ENCODE measurements at regions of chr3 and their contacts with region 1.

Region 1: GRCh38 chr3:172461530-172462138 is 13.4 kb upstream of the GHSR start:
- DNase-seq: no peak
- ATAC-seq: peak; percentile 53
- H3K4me3 Mint-ChIP-seq: no peak overlapping the region
- H3K27ac Mint-ChIP-seq: no peak overlapping the region
- H3K4me1 Mint-ChIP-seq: no peaks in the 10 kb centered on the region
- H3K27me3 Mint-ChIP-seq: peaks cover 2% of the 10 kb centered on the region

Region 2: DNA sequence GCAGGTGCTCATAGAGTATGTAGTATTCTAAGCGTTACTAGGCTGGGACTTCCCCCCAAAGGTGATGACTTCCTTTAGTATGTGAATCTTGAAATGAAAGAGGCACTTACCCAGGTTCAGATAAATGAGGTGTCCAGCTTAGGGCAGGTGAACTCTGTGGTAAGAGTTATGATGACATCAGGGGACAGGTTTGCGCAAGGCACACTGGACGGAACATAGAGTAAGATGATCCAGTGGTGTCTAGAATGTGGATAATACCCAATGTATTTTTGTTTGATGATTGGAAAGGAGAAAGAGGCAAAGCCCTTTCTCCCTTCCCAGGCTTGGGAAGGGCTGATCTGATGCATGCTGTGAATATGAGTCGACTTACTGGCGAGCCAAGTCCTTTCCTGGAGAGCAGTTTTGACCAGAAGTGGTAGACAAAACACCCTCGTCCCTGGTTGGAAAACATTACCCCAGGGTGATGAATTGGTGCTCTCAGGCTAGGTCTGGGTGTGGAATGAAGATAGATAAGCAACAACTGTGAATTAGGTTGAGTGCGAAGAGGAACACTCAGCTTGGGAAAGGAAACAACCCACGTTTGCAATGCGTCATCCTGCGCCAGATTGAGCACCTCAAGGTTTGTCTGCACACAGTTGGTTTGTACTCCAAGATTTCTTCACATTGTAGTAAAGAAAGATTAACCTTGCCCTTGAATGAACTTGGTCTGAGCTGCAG is 137.6 kb before region 1 on chr3:
- CTCF ChIA-PET with region 1: no interaction called
- POLR2A ChIA-PET with region 1: no interaction called
- intact Hi-C with region 1: no loop called
- DNase-seq: peak; percentile 59
- ATAC-seq: peak; percentile 92
- H3K4me3 Mint-ChIP-seq: no peak overlapping the region
- H3K27ac Mint-ChIP-seq: peak overlapping the region; percentile 59
- H3K4me1 Mint-ChIP-seq: peaks cover 11% of the 10 kb centered on the region
- H3K27me3 Mint-ChIP-seq: no peaks in the 10 kb centered on the region

Region 3: GRCh38 chr3:172476347-172476746 is 14.7 kb after region 1 on chr3:
- CTCF ChIA-PET with region 1: interaction called, 19 read pairs
- POLR2A ChIA-PET with region 1: no interaction called
- intact Hi-C with region 1: loop called in 1 of 2 experiments (anchors 2 kb)
- DNase-seq: no peak
- ATAC-seq: no peak
- H3K4me3 Mint-ChIP-seq: peak overlapping the region; percentile 79
- H3K27ac Mint-ChIP-seq: peak overlapping the region; percentile 4
- H3K4me1 Mint-ChIP-seq: peaks cover 20% of the 10 kb centered on the region
- H3K27me3 Mint-ChIP-seq: no peaks in the 10 kb centered on the region

Region 4: GRCh38 chr3:172622916-172623700 is 161.5 kb after region 1 on chr3:
- CTCF ChIA-PET with region 1: interaction called, 13 read pairs
- POLR2A ChIA-PET with region 1: no interaction called
- intact Hi-C with region 1: loop called in 1 of 2 experiments (anchors 1 kb)
- DNase-seq: peak; percentile 64
- ATAC-seq: peak; percentile 51
- H3K4me3 Mint-ChIP-seq: no peak overlapping the region
- H3K27ac Mint-ChIP-seq: no peak overlapping the region
- H3K4me1 Mint-ChIP-seq: peaks cover 10% of the 10 kb centered on the region
- H3K27me3 Mint-ChIP-seq: no peaks in the 10 kb centered on the region

Measured in activated CD4-positive, alpha-beta T cell treated with anti-CD3 and anti-CD28 coated beads for 36 hours (primary cell).